ENCODE measurements at regions of chr17 and their contacts with region 1.

Region 1: GRCh38 chr17:46940621-46941404 is 17.9 kb downstream of the GOSR2 start:
- DNase-seq: peak; percentile 59 to 96 (median 77)

Region 2: GRCh38 chr17:46841561-46842379 is 99.0 kb before region 1 on chr17:
- intact Hi-C with region 1: loop called (anchors 5 kb)
- DNase-seq: peak in 3 of 10 donors; percentile 30 to 89 (median 70)

Region 3: DNA sequence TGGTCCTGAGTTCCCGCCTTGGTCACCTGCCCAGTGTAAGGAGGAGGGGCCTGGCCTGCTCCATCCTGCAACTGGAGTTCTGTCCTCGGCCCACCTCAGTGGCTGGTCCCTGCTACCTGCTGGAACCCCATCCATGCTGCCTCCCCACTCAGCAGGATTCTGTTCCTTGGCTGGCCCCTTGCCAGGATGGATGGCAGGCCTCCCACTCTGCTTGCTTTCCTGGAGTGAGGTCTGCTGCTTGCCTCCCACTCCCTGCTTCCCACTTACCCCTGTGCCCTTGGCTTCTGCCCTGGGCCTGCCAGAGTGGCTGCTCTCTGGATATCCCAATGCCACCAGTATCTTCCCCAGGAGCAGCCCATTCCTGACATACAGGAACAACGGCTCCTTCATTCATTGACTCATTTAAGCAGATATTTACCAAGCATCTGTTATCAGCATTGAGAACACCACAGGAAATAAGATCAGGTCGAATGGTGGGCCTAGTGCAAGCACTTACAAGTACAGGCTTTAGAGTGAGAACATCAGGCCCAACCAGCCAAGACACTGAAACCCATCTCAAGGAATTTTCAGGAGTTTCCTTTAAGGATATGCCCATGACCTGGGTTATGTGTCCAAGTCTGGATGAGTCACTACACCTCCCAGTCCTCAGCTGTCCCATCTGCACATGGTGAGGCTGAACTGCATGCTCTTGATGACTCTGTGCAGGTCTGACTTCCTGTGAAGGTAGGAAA is 55.2 kb after region 1 on chr17:
- intact Hi-C with region 1: loop called (anchors 1 kb)
- DNase-seq: no peak

Measured in posterior cingulate gyrus (tissue), 11 donors.